ENCODE measurements at regions of chr3 and their contacts with region 1.

Region 1: GRCh38 chr3:27253831-27254230 is 115.4 kb downstream of the NEK10 start:
- DNase-seq: peak; percentile 28
- H3K4me3 Mint-ChIP-seq: no peak overlapping the region
- H3K27ac Mint-ChIP-seq: no peak overlapping the region
- H3K4me1 Mint-ChIP-seq: no peaks in the 10 kb centered on the region
- H3K27me3 Mint-ChIP-seq: peaks cover 2% of the 10 kb centered on the region

Region 2: GRCh38 chr3:27134165-27134796 is 119.5 kb before region 1 on chr3:
- CTCF ChIA-PET with region 1: interaction called, 17 read pairs
- POLR2A ChIA-PET with region 1: no interaction called
- DNase-seq: peak; percentile 66
- H3K4me3 Mint-ChIP-seq: no peak overlapping the region
- H3K27ac Mint-ChIP-seq: no peak overlapping the region
- H3K4me1 Mint-ChIP-seq: no peaks in the 10 kb centered on the region
- H3K27me3 Mint-ChIP-seq: peaks cover 3% of the 10 kb centered on the region